GM10248 (cell line): ENCODE measurements at regions of chr7 and their contacts with region 1.

Region 1: GRCh38 chr7:69677054-69677852 is 79.0 kb downstream of the AUTS2 start:
- DNase-seq: no peak
- CTCF ChIP-seq: peak; percentile 35

Region 2: DNA sequence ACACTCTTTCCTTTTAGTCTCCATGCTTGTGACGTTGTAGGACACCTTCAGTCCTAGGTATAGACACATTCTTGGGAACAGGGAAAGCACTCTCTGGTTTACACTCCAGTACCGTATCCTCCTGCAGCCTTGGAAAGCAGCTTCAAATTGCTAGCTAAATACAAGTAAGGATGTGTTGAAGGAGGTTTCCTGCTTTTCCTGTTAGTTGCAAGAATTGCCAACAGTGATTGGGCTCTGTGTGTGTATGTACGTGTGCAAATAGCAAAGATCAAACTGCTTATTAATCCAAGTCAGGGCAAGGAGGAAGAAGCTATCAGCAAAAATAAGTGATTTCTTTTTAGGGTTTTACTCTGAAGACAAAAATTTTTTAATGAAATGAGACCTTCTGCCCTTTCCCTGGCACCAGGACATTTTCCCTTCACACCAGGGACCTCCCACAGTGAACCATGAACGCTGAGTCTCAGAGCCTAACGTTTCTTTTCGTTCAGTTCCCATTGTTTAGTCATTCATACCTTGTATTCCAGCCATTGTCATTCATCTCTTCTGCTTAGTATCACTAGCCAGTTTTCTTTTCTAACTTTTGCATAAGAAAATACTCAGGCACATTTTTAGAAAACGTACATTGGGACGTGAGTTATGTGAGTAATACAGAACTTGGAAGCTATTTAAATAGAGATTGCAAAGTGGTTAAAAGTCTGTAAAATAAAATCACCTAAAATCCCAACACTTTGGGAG is 115.8 kb before region 1 on chr7:
- CTCF ChIA-PET with region 1: no interaction called
- POLR2A ChIA-PET with region 1: no interaction called
- DNase-seq: no peak
- CTCF ChIP-seq: no peak

Region 3: DNA sequence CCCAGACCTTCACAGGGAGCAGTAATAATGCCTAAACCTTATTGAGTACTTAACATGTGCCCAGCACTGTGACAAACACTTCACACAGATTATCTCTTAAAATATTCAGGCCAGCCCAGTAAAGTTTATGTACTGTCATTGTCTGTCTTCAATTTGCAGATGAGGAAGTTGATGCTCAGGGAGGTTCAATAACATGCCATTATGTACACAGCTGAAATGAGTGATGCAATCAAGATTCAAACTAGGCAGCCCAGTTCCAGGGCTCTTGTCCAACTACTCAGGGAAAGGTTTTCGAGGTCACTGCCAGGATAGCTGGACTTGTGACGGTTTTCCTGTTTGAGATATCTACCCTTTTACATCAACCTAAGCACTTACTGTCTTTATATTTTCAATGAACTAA is 22.9 kb before region 1 on chr7:
- CTCF ChIA-PET with region 1: interaction called, 14 read pairs
- POLR2A ChIA-PET with region 1: no interaction called
- DNase-seq: no peak
- CTCF ChIP-seq: no peak

Region 4: GRCh38 chr7:69693042-69693441 is 15.8 kb after region 1 on chr7:
- CTCF ChIA-PET with region 1: interaction called, 35 read pairs
- POLR2A ChIA-PET with region 1: no interaction called
- DNase-seq: no peak
- CTCF ChIP-seq: no peak